Endothelial cell of umbilical vein (primary cell): ENCODE measurements at regions of chr1 and their contacts with region 1.

Region 1: DNA sequence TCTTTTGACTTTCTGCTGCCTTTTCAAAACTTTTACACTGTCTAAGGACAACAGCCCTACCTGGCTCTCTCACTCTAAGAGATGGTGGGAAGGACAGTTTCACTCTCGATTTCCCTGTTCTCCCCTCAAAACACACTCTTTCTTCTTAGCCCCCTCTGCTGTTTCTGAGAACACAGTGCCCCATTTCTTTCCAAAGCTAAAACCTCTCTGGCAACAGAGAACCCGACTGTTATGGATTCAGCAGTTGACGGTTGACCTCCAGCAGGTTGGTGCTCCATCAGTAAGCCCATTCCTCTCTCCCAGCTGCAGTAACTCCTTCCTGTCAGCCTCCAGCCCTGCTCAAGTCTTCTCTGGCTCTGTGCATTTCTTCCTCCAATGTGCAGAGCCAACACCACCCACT is 88.2 kb upstream of the ABCD3 start:
- DNase-seq: peak; percentile 76
- H3K4me3 ChIP-seq: no peak overlapping the region
- H3K27ac ChIP-seq: peak overlapping the region; percentile 26
- H3K4me1 ChIP-seq: peaks cover 50% of the 10 kb centered on the region
- H3K27me3 ChIP-seq: no peaks in the 10 kb centered on the region
- CTCF ChIP-seq: peak; percentile 65 to 70
- POLR2A ChIP-seq: no peak

Region 2: GRCh38 chr1:94068999-94069918 is 260.7 kb before region 1 on chr1:
- CTCF ChIA-PET with region 1: interaction called, 252 read pairs
- POLR2A ChIA-PET with region 1: interaction called, 4 read pairs
- dilution Hi-C with region 1: no loop called
- intact Hi-C with region 1: loop called (anchors 1 kb)
- DNase-seq: peak; percentile 98
- H3K4me3 ChIP-seq: no peak overlapping the region
- H3K27ac ChIP-seq: peak overlapping the region; percentile 100
- H3K4me1 ChIP-seq: peaks cover 77% of the 10 kb centered on the region
- H3K27me3 ChIP-seq: no peaks in the 10 kb centered on the region
- CTCF ChIP-seq: no peak
- POLR2A ChIP-seq: no peak

Region 3: DNA sequence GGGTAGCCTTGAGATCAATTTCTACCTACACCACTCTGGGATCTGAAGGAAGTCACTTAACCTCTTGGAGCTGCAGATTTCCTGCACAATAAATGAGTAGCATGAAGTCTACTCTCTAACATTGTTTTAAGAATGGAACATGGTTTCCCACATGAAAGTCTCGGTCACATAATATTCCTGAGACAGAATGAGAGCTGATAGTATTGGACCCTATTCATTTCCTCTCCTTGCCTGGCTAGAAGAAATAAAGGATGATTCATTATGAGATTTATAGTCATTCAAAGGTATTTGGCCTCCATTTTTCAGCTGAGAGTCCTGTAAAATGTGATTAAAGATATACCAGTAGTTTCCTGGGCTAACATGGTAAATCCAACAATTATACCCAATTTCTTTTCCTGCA is 149.3 kb before region 1 on chr1:
- CTCF ChIA-PET with region 1: interaction called, 41 read pairs
- POLR2A ChIA-PET with region 1: interaction called, 3 read pairs
- dilution Hi-C with region 1: no loop called
- intact Hi-C with region 1: loop called (anchors 5 kb)
- DNase-seq: peak; percentile 49
- H3K4me3 ChIP-seq: no peak overlapping the region
- H3K27ac ChIP-seq: peak overlapping the region; percentile 18
- H3K4me1 ChIP-seq: peaks cover 36% of the 10 kb centered on the region
- H3K27me3 ChIP-seq: no peaks in the 10 kb centered on the region
- CTCF ChIP-seq: no peak
- POLR2A ChIP-seq: no peak

Region 4: GRCh38 chr1:94209425-94209824 is 120.6 kb before region 1 on chr1:
- CTCF ChIA-PET with region 1: interaction called, 19 read pairs
- POLR2A ChIA-PET with region 1: no interaction called
- dilution Hi-C with region 1: no loop called
- intact Hi-C with region 1: no loop called
- DNase-seq: no peak
- H3K4me3 ChIP-seq: no peak overlapping the region
- H3K27ac ChIP-seq: no peak overlapping the region
- H3K4me1 ChIP-seq: peaks cover 38% of the 10 kb centered on the region
- H3K27me3 ChIP-seq: no peaks in the 10 kb centered on the region
- CTCF ChIP-seq: no peak
- POLR2A ChIP-seq: no peak

Region 5: DNA sequence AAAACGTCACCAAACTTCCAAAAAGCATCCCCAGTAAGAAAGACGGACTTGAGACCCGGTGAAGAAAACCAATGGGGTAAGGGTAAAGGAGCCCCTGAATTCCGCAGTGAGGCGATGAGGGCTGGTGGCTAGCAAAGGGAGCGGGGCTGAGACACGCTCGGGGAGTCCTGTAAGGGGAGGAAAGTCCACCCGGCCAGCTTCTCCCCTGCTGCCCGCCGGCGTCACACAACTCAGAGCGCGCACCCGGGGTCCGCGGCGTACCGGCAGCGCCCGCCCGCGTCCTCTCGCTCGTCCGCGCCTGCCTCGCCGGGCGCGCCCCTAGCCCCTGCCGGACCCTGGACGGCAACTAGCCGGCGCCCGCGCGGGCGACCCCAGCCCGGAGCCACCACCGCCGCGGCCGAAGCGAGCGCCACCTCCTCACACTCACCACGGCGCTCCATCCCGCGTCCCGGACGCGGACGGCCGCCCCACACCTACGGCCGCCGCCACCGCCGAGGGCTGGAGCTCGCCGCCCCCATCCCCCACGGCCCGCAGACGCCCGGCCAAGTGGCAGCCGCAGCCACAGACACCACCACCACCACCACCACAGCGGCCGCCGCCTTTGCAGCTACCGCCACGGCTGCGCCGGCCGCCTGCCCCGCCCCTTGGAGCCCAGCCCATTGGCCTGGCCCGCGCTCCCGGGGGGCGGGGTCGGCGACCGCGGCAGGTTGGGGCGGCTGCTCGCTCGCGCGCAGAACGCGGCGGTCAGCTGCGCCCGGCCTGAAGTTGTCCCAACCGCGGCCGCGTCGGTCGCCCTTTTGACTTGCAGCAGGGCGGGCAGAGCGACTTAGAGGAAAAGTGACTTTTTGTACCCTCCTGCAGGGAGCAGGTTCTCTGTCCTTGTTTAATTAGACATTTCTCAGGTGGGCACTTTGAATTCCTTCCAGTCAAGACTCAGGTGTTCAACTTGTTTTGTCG is 82.6 kb before region 1 on chr1:
- CTCF ChIA-PET with region 1: interaction called, 22 read pairs
- POLR2A ChIA-PET with region 1: interaction called, 6 read pairs
- dilution Hi-C with region 1: no loop called
- intact Hi-C with region 1: loop called (anchors 1 kb)
- DNase-seq: peak; percentile 80
- H3K4me3 ChIP-seq: peak overlapping the region; percentile 58 to 98 (median 75)
- H3K27ac ChIP-seq: peak overlapping the region; percentile 90
- H3K4me1 ChIP-seq: peaks cover 23% of the 10 kb centered on the region
- H3K27me3 ChIP-seq: no peaks in the 10 kb centered on the region
- CTCF ChIP-seq: no peak
- POLR2A ChIP-seq: peak; percentile 95

Region 6: GRCh38 chr1:94299627-94300552 is 30.1 kb before region 1 on chr1:
- CTCF ChIA-PET with region 1: interaction called, 12 read pairs
- POLR2A ChIA-PET with region 1: interaction called, 23 read pairs
- dilution Hi-C with region 1: no loop called
- intact Hi-C with region 1: loop called (anchors 1 kb)
- DNase-seq: peak; percentile 88
- H3K4me3 ChIP-seq: no peak overlapping the region
- H3K27ac ChIP-seq: peak overlapping the region; percentile 70
- H3K4me1 ChIP-seq: peaks cover 81% of the 10 kb centered on the region
- H3K27me3 ChIP-seq: no peaks in the 10 kb centered on the region
- CTCF ChIP-seq: no peak
- POLR2A ChIP-seq: no peak